GM10248 (cell line): ENCODE measurements at regions of chr1 and their contacts with region 1.

Region 1: GRCh38 chr1:30779294-30780071 is 21.9 kb upstream of the LAPTM5 start:
- DNase-seq: peak; percentile 87
- CTCF ChIP-seq: peak; percentile 95

Region 2: DNA sequence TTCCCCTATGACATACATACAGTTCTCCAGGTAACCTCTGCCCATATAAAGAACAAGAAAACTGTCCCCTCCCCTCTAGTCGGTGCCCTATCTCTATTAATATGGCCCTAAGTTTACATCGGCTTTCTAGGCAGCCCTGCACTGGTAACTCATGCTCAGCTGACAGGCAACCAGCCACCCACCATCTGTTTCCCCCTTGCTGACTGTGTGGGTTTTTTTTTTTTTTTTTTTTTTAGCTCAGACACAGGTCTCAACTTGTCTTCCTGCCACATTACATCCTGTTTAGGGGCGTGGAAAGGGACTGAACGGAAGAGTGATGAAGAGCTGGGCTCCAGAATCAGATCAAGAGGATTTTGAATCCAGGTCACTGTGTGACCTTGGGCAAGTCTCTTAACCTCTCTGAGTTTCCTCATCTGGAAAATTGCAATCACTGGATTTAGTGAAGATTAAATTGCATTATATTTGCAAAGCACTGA is 35.9 kb before region 1 on chr1:
- CTCF ChIA-PET with region 1: interaction called, 449 read pairs
- POLR2A ChIA-PET with region 1: interaction called, 3 read pairs
- DNase-seq: peak; percentile 81
- CTCF ChIP-seq: no peak

Region 3: GRCh38 chr1:30790850-30791778 is 11.6 kb after region 1 on chr1:
- CTCF ChIA-PET with region 1: interaction called, 36 read pairs
- POLR2A ChIA-PET with region 1: no interaction called
- DNase-seq: peak; percentile 50
- CTCF ChIP-seq: no peak

Region 4: GRCh38 chr1:30830537-30830936 is 51.1 kb after region 1 on chr1:
- CTCF ChIA-PET with region 1: no interaction called
- POLR2A ChIA-PET with region 1: no interaction called
- DNase-seq: no peak
- CTCF ChIP-seq: no peak

Region 5: DNA sequence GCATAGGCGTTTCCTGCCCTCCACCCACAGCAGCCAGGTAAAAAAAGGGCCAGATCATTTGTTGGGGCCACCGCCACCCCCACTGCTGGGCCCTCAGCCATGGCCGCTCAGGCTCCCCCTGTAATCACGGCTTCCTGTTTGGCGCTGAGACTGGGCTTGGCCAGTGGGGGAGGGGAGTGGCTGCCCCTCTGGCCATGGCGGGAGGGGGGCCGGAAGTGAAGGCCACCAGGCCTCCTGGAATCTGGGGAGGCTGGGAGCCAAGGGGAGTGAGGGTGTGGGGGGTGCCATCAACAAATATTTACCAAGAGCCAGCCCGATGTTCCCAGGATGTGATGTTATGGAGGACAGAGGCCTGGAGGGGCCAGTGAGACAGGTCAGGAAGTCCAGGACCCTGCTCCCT is 122.7 kb after region 1 on chr1:
- CTCF ChIA-PET with region 1: interaction called, 13 read pairs
- POLR2A ChIA-PET with region 1: no interaction called
- DNase-seq: no peak
- CTCF ChIP-seq: no peak

Region 6: DNA sequence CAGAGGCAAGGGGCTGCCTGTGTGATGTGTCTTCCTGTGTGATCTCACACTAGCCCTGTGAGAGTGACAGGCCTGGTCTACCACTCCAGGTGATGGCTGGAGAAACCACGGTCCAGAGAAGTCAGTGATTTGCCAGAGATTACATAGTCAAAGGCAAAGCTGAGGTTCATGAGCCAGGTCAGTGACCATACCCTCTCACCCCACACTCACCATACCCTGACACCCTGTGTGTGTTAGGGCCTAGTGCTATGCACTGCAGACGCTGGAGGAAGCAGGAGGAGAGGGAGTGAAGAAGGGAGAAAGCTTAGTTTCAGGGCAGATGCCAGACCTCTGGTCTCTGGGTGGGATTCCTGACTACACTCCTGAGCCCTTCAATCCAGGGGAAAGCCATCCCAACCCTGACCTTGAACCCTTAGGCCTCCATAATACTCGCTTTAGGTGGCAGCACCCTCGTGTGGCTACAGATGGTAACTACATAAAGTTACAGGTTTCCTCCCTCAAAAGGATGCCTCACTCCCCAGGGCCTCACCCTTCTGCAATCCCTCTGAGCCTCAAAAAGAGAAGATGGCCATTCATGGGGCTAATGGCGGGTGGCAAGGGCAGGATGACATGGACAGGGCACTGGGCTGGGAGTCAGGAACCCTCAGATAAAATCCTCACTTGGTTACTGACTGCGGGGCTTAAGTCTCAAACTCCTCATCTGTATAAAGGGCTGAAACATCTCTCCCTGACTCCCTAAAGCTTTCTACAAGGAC is 149.8 kb after region 1 on chr1:
- CTCF ChIA-PET with region 1: interaction called, 19 read pairs
- POLR2A ChIA-PET with region 1: no interaction called
- DNase-seq: peak; percentile 68
- CTCF ChIP-seq: peak; percentile 76